PC-9 (cell line): ENCODE measurements at regions of chr6 and their contacts with region 1.

Region 1: DNA sequence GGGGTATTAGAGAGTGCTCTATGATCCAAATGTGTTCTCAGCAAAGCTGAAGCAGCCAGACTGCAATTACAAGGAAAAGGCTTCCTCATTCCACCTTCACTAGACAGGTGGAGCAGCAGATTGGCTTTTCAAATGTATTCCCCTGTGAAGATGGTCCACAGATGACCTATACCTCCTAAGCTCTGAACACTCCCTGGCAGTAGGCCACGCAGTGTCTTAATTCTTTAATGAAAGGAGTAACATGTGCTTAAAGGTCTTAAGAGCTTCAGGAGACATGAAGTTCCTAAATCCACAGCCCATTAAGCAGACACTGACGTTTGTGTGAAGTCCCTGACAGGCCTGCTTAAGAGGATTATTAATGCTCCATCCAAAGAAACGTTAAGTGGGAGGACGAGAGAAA is 138.9 kb upstream of the NUP153 start:
- DNase-seq: no peak
- H3K4me3 ChIP-seq: no peak overlapping the region
- H3K27ac ChIP-seq: no peak overlapping the region
- H3K4me1 ChIP-seq: no peaks in the 10 kb centered on the region
- H3K27me3 ChIP-seq: no peaks in the 10 kb centered on the region
- CTCF ChIP-seq: no peak

Region 2: DNA sequence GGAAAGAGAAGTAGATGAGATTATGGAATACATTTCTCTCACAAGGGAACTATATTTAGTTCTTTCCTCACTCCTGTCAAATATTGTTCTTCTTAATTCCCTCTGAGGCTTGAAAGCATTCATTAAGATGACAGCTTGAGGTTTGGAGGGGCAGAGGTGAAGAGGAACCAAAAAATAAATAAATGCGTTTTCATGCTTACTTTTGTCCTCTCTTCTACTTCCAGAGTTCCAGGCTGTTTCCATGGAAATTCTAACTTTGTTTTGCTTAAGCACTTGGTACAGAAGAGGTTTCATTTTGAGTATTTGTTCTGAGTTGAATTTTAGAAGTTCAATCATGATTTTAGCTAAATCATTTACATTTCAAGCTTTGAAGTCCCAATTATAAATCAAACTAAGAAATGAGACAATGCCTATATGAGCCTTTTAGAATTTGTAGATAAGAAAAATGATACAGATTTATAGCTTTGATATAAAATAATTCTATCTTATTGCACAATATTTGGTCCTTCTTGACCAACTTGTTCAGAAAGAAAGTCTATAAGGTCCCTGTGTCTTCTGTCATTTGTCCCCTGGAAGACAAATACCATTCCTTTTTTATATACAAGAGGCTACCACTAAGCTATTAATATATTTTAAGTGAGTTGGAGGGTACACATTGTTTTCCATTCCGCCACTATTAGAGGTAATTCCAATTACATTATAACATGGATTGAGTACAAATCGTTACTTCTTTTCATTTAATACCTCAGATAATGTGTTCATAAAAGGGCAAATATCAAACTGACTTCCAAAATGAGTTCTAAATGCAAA is 548.1 kb before region 1 on chr6:
- CTCF ChIA-PET with region 1: no interaction called
- POLR2A ChIA-PET with region 1: interaction called, 21 read pairs
- intact Hi-C with region 1: no loop called
- DNase-seq: no peak
- H3K4me3 ChIP-seq: no peak overlapping the region
- H3K27ac ChIP-seq: no peak overlapping the region
- H3K4me1 ChIP-seq: no peaks in the 10 kb centered on the region
- H3K27me3 ChIP-seq: no peaks in the 10 kb centered on the region
- CTCF ChIP-seq: no peak

Region 3: DNA sequence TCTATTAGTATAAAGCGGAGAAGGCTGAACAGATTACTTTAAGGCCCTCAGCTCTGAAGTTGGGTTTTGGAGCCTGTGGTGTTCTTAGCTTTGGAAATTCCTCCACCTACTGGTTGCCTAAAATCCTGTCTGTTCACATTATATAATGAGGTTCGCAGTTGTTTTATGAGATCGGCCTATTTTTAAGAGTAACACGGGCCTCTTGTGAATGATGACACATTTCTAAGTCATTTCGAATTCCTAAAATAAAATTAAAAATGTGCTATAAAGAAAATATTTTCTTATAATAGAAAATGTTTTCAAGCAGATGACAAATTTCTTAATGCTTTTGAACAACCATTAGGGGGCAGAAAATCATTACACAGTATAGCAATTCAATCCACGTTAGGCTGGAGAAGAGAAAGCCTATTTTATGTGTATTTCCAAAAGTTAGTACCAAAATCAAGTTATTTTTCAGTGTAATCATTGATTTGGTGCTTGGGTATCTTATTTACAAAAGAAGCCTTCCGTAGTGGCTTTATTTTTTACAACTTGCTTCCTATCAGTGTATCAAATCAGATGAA is 261.3 kb before region 1 on chr6:
- CTCF ChIA-PET with region 1: no interaction called
- POLR2A ChIA-PET with region 1: no interaction called
- intact Hi-C with region 1: no loop called
- DNase-seq: no peak
- H3K4me3 ChIP-seq: no peak overlapping the region
- H3K27ac ChIP-seq: no peak overlapping the region
- H3K4me1 ChIP-seq: peaks cover 5% of the 10 kb centered on the region; the same call in 1 of the 2 replicates
- H3K27me3 ChIP-seq: no peaks in the 10 kb centered on the region
- CTCF ChIP-seq: peak; percentile 90

Region 4: GRCh38 chr6:17785094-17785787 is 60.4 kb before region 1 on chr6:
- CTCF ChIA-PET with region 1: no interaction called
- POLR2A ChIA-PET with region 1: no interaction called
- intact Hi-C with region 1: no loop called
- DNase-seq: no peak
- H3K4me3 ChIP-seq: no peak overlapping the region
- H3K27ac ChIP-seq: no peak overlapping the region
- H3K4me1 ChIP-seq: no peaks in the 10 kb centered on the region
- H3K27me3 ChIP-seq: no peaks in the 10 kb centered on the region
- CTCF ChIP-seq: no peak